ENCODE measurements at regions of chr2 and their contacts with region 1.

Region 1: GRCh38 chr2:152611458-152612231 is 105.6 kb downstream of the PRPF40A start:
- DNase-seq: peak; percentile 15
- ATAC-seq: peak; percentile 86
- H3K4me3 Mint-ChIP-seq: peak overlapping the region; percentile 63
- H3K27ac Mint-ChIP-seq: peak overlapping the region; percentile 26
- H3K4me1 Mint-ChIP-seq: peaks cover 28% of the 10 kb centered on the region
- H3K27me3 Mint-ChIP-seq: no peaks in the 10 kb centered on the region
- CTCF ChIP-seq: no peak

Region 2: DNA sequence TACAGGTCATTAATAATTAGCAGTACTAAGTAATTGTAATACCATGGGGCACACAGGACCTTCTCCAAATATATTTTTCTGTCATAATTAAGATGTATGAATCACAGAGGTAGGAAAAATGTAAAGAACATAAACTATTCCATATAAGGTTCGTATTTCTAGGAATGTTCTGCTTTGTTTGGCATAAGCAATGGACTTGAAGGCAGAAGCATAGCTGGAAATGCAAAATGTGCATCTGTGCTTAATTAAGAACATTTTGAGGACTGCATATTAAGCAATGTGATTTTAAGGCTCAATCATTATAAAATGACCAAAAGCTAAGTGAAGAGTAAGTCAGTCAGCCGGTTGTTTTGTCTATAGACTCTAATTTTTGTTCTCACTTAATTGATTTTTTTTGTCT is 1473.1 kb before region 1 on chr2:
- CTCF ChIA-PET with region 1: no interaction called
- POLR2A ChIA-PET with region 1: no interaction called
- intact Hi-C with region 1: no loop called
- DNase-seq: no peak
- ATAC-seq: no peak
- H3K4me3 Mint-ChIP-seq: no peak overlapping the region
- H3K27ac Mint-ChIP-seq: no peak overlapping the region
- H3K4me1 Mint-ChIP-seq: no peaks in the 10 kb centered on the region
- H3K27me3 Mint-ChIP-seq: no peaks in the 10 kb centered on the region
- CTCF ChIP-seq: no peak

Region 3: GRCh38 chr2:152466980-152467676 is 144.5 kb before region 1 on chr2:
- CTCF ChIA-PET with region 1: no interaction called
- POLR2A ChIA-PET with region 1: no interaction called
- intact Hi-C with region 1: loop called (anchors 5 kb)
- DNase-seq: no peak
- ATAC-seq: peak; percentile 75
- H3K4me3 Mint-ChIP-seq: peak overlapping the region; percentile 52
- H3K27ac Mint-ChIP-seq: peak overlapping the region; percentile 73
- H3K4me1 Mint-ChIP-seq: peaks cover 63% of the 10 kb centered on the region
- H3K27me3 Mint-ChIP-seq: no peaks in the 10 kb centered on the region
- CTCF ChIP-seq: no peak

Region 4: DNA sequence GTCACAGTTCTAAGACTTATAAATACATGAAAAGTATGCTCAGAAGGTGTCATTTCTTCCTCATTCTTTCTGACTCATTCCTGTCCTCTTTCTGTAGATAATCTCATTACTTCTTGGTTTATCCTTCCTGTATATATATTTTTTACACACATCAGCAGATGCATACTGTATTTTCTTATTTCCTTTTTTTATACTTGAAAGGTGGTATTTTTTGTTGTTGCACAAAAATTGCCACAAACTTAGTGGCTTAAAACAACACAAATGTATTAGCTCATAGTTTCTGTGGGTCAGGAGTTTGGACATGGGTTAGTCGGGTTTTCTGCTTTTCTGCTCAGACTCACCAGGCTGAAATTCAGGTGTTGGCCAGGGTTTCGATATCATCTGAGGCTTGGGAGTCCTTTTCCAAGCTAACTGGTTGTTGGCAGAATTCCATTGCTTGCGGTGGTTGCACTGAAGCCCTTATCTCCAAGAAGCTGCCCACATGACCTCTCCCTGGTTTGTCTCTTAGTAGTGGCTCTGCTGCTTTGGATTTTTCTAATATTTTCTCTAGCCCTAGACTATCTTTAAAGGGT is 114.1 kb before region 1 on chr2:
- CTCF ChIA-PET with region 1: no interaction called
- POLR2A ChIA-PET with region 1: no interaction called
- intact Hi-C with region 1: loop called (anchors 5 kb)
- DNase-seq: no peak
- ATAC-seq: peak; percentile 28
- H3K4me3 Mint-ChIP-seq: no peak overlapping the region
- H3K27ac Mint-ChIP-seq: no peak overlapping the region
- H3K4me1 Mint-ChIP-seq: peaks cover 48% of the 10 kb centered on the region
- H3K27me3 Mint-ChIP-seq: no peaks in the 10 kb centered on the region
- CTCF ChIP-seq: no peak

Region 5: GRCh38 chr2:152564754-152565551 is 46.7 kb before region 1 on chr2:
- CTCF ChIA-PET with region 1: no interaction called
- POLR2A ChIA-PET with region 1: no interaction called
- intact Hi-C with region 1: loop called (anchors 1 kb)
- DNase-seq: no peak
- ATAC-seq: no peak
- H3K4me3 Mint-ChIP-seq: peak overlapping the region; percentile 3
- H3K27ac Mint-ChIP-seq: no peak overlapping the region
- H3K4me1 Mint-ChIP-seq: peaks cover 27% of the 10 kb centered on the region
- H3K27me3 Mint-ChIP-seq: no peaks in the 10 kb centered on the region
- CTCF ChIP-seq: no peak

Region 6: GRCh38 chr2:152594022-152594766 is 17.5 kb before region 1 on chr2:
- CTCF ChIA-PET with region 1: no interaction called
- POLR2A ChIA-PET with region 1: no interaction called
- intact Hi-C with region 1: loop called (anchors 2 kb)
- DNase-seq: no peak
- ATAC-seq: peak; percentile 96
- H3K4me3 Mint-ChIP-seq: peak overlapping the region; percentile 17
- H3K27ac Mint-ChIP-seq: peak overlapping the region; percentile 9
- H3K4me1 Mint-ChIP-seq: peaks cover 15% of the 10 kb centered on the region
- H3K27me3 Mint-ChIP-seq: no peaks in the 10 kb centered on the region
- CTCF ChIP-seq: no peak

Region 7: DNA sequence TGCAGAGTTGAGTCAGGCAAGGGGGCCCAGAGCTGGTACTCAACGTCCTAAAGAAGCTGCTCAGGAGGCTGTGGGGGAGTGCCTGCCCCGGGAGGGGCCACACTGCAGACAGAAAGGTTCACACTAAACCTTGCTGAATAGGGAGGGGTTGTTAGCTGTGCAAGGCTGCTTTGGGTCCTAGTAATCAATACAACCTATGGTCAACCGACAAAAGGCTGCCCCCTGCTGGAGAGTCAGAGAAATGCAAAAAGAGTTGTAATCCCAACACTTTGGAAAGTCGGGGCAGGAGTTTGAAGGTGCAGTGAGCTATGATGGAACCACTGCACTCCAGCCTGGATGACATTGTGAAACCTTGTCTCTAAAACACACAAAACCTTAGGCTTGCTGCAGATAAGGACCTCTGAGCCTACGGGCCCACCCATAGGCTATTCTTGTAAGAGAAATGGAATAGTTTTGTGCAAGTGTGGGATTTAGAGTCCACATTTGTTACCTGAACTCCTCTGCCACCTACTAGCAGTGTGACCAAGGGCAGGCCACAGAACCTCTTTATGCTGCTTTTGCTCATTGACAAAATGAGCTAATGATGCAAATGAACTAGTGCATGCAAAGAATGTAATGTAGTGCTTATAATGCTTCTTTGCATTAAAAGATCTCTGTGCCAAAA is 24.1 kb after region 1 on chr2:
- CTCF ChIA-PET with region 1: interaction called, 12 read pairs
- POLR2A ChIA-PET with region 1: no interaction called
- intact Hi-C with region 1: no loop called
- DNase-seq: peak; percentile 36
- ATAC-seq: peak; percentile 70
- H3K4me3 Mint-ChIP-seq: no peak overlapping the region
- H3K27ac Mint-ChIP-seq: no peak overlapping the region
- H3K4me1 Mint-ChIP-seq: no peaks in the 10 kb centered on the region
- H3K27me3 Mint-ChIP-seq: no peaks in the 10 kb centered on the region
- CTCF ChIP-seq: no peak

Region 8: GRCh38 chr2:152710713-152711112 is 99.1 kb after region 1 on chr2:
- CTCF ChIA-PET with region 1: no interaction called
- POLR2A ChIA-PET with region 1: no interaction called
- intact Hi-C with region 1: no loop called
- DNase-seq: no peak
- ATAC-seq: no peak
- H3K4me3 Mint-ChIP-seq: no peak overlapping the region
- H3K27ac Mint-ChIP-seq: no peak overlapping the region
- H3K4me1 Mint-ChIP-seq: peaks cover 33% of the 10 kb centered on the region
- H3K27me3 Mint-ChIP-seq: no peaks in the 10 kb centered on the region
- CTCF ChIP-seq: no peak

Region 9: GRCh38 chr2:152950126-152950525 is 338.5 kb after region 1 on chr2:
- CTCF ChIA-PET with region 1: no interaction called
- POLR2A ChIA-PET with region 1: no interaction called
- intact Hi-C with region 1: no loop called
- DNase-seq: no peak
- ATAC-seq: no peak
- H3K4me3 Mint-ChIP-seq: no peak overlapping the region
- H3K27ac Mint-ChIP-seq: no peak overlapping the region
- H3K4me1 Mint-ChIP-seq: no peaks in the 10 kb centered on the region
- H3K27me3 Mint-ChIP-seq: no peaks in the 10 kb centered on the region
- CTCF ChIP-seq: no peak